ENCODE measurements at regions of chr5 and their contacts with region 1.

Region 1: DNA sequence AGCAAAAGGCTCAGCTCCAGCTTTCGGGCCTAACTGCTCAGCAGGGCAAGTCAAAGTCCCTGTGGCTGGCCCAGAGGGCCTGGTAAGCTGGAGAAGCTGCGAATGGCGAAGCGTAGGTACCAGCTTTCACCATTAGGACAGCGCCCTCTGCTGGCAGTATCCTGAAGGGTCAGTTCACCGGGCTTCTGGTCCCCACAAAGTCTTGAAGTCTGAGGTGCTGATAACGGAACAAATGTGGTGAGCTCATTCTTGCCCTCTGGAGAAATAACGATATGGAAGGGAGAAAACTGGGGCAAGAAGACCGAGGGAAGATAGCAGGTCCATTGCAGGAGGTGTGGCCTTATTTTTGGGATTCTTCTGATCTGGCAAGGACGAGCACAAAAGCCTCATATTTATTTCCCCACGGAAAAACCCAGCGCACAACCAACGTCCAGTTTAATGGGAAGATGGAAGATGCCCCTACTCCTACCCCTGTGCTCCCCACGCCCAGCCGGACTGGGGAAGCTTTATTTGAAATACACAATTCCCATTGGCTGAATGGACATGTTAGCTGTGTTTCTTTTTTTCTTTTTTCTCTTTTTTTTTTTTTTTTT is 7.2 kb downstream of the SOWAHA start:
- DNase-seq: peak; percentile 81 to 99 (median 92)
- ATAC-seq: peak; percentile 82 to 94 (median 89)
- H3K4me3 ChIP-seq: no peak overlapping the region
- H3K27ac ChIP-seq: no peak overlapping the region
- H3K4me1 ChIP-seq: no peaks in the 10 kb centered on the region
- H3K27me3 ChIP-seq: no peaks in the 10 kb centered on the region
- CTCF ChIP-seq: peak; percentile 87 to 94 (median 91)

Region 2: DNA sequence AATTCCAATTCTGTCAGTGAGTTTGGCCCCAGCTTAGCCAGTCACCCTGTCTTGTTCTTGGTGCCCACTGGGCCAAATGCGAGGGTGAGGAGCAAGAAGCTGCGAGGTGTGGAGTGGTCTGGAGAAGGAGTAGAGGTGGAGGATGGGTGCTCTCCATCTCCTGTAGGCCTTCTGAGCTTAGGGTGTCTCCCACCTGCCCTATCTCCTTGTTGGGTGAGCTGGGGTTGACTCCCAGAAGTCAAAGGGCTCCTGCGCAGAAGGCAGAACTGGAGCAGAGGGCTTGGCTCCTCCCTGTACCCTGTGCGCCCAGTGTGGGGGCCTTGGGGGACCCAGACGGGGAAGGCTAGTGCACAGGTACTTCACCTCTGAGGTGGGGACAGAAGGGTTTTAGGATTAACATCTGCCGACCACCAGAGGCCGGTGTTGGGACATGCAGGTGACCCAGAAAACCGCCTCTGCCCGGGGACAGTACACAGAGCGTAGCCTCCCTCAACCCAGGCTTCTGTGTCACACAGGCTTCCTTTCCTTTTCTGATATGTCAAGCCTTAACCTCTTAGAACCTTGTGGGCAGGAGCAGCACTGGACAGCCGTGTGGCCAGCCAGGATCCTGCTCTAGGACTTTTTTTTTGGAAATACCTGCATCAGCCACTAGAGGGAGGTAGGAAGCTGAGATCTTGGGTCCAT is 293.8 kb before region 1 on chr5:
- intact Hi-C with region 1: loop called in 1 of 3 experiments (anchors 10 kb)
- DNase-seq: peak in 5 of 6 donors; percentile 12 to 67 (median 50)
- ATAC-seq: peak; percentile 87 to 97 (median 94)
- H3K4me3 ChIP-seq: peak overlapping the region in 1 of 4 donors; percentile 30
- H3K27ac ChIP-seq: no peak overlapping the region
- H3K4me1 ChIP-seq: no peaks in the 10 kb centered on the region
- H3K27me3 ChIP-seq: no peaks in the 10 kb centered on the region
- CTCF ChIP-seq: peak; percentile 66 to 85 (median 78)

Region 3: DNA sequence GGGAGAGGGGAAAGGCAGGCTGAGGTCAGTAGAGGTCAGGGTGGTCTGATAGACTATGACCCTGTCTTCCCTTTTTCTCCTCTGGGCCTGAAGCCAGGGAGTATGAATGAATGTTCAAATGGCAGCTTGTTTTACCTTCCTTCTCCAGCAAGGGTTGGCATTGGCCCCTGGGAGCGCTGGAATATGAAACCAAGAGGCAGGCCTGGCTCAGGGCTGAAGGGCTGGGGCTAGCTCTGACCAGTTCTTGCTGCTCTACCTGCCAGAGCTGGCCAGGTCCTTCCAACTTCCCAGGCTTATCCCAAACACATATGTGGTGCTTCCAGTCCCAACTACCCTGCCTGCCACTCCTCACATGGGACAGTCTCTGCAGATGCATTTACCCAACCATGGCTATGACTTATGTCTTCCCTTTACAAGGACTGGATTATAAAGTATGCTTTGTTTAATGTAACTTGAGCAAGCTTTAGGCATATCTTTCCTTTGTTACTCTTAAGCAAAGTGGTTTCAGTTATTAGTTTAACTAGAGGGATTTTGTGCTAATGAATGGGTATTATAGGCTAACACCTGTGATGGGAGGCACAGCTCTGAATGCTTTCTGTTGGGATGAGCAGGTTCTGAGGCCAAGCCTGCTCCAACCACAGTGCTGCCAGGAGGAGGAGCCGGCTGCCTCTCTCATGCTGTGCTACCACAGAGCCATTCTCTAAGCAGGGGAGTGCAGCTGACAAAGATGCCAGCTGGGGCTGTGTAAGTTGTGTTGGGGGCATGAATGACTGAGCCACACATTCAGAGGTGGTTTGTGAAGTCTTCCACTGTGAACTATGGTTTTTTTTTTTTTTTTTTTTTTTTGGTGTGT is 66.9 kb before region 1 on chr5:
- intact Hi-C with region 1: loop called in 1 of 3 experiments (anchors 5 kb)
- DNase-seq: no peak
- ATAC-seq: peak; percentile 45 to 80 (median 56)
- H3K4me3 ChIP-seq: no peak overlapping the region
- H3K27ac ChIP-seq: peak overlapping the region in 1 of 4 donors; percentile 27
- H3K4me1 ChIP-seq: no peaks in the 10 kb centered on the region
- H3K27me3 ChIP-seq: no peaks in the 10 kb centered on the region
- CTCF ChIP-seq: no peak

Region 4: DNA sequence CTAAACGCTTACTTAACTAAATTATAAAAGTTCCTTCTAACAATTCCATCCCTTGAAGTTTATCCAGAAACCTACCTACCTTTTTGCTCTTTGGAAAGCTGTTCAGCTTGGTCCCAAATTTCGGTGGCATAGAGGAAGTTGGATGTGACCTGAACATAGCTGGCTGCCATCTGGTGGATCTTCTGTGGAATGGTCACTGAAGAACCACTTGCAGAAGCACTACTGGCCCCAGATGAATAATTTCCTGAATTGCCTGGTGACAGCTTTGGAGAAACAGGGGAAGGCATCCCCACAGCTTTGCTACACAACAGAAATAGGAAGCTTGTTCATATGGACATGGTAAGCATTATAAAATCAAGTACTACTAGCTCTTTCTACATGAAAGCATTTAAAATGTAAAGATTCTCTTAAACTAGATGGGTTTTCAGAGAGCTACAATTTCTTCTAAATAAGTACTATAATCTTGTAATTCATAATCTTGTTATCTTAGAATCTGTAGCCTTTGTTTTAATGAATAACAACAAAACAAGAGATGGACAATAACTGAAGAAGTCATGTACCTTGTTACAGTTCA is 63.1 kb after region 1 on chr5:
- intact Hi-C with region 1: loop called in 1 of 3 experiments (anchors 10 kb)
- DNase-seq: peak in 3 of 6 donors; percentile 43 to 56 (median 44)
- ATAC-seq: peak; percentile 83 to 97 (median 96)
- H3K4me3 ChIP-seq: no peak overlapping the region
- H3K27ac ChIP-seq: no peak overlapping the region
- H3K4me1 ChIP-seq: no peaks in the 10 kb centered on the region
- H3K27me3 ChIP-seq: no peaks in the 10 kb centered on the region
- CTCF ChIP-seq: peak; percentile 8 to 56 (median 45)